ENCODE measurements at regions of chr7 and their contacts with region 1.

Region 1: GRCh38 chr7:100137851-100138760 is 10.6 kb upstream of the LAMTOR4 start:
- DNase-seq: no peak
- ATAC-seq: no peak
- H3K4me3 ChIP-seq: no peak overlapping the region
- H3K27ac ChIP-seq: no peak overlapping the region
- H3K4me1 ChIP-seq: peaks cover 0 to 15% of the 10 kb centered on the region in 2 donors
- H3K27me3 ChIP-seq: no peaks in the 10 kb centered on the region
- CTCF ChIP-seq: no peak

Region 2: GRCh38 chr7:100221231-100221718 is 83.2 kb after region 1 on chr7:
- intact Hi-C with region 1: loop called in 1 of 2 experiments (anchors 5 kb)
- DNase-seq: no peak
- ATAC-seq: peak; percentile 9
- H3K4me3 ChIP-seq: peak overlapping the region in 1 of 2 donors; percentile 28
- H3K27ac ChIP-seq: peak overlapping the region in 1 of 2 donors; percentile 34
- H3K4me1 ChIP-seq: no peaks in the 10 kb centered on the region
- H3K27me3 ChIP-seq: no peaks in the 10 kb centered on the region
- CTCF ChIP-seq: no peak